ENCODE measurements at regions of chr6 and their contacts with region 1.

Region 1: GRCh38 chr6:142207265-142207877 is 60.3 kb downstream of the VTA1 start:
- DNase-seq: peak; percentile 33
- H3K4me3 Mint-ChIP-seq: no peak overlapping the region
- H3K27ac Mint-ChIP-seq: no peak overlapping the region
- H3K4me1 Mint-ChIP-seq: no peaks in the 10 kb centered on the region
- H3K27me3 Mint-ChIP-seq: no peaks in the 10 kb centered on the region

Region 2: GRCh38 chr6:141884850-141885249 is 322.5 kb before region 1 on chr6:
- CTCF ChIA-PET with region 1: no interaction called
- POLR2A ChIA-PET with region 1: no interaction called
- DNase-seq: no peak
- H3K4me3 Mint-ChIP-seq: no peak overlapping the region
- H3K27ac Mint-ChIP-seq: no peak overlapping the region
- H3K4me1 Mint-ChIP-seq: no peaks in the 10 kb centered on the region
- H3K27me3 Mint-ChIP-seq: no peaks in the 10 kb centered on the region

Region 3: GRCh38 chr6:142146828-142147662 is 60.3 kb before region 1 on chr6 and contains the starts of genes NMBR and VTA1:
- CTCF ChIA-PET with region 1: interaction called, 22 read pairs
- POLR2A ChIA-PET with region 1: interaction called, 7 read pairs
- DNase-seq: peak; percentile 97
- H3K4me3 Mint-ChIP-seq: peak within 1 kb of the TSS; percentile 94
- H3K27ac Mint-ChIP-seq: peak within 1 kb of the TSS; percentile 83
- H3K4me1 Mint-ChIP-seq: peaks cover 48% of the 10 kb centered on the region
- H3K27me3 Mint-ChIP-seq: no peaks in the 10 kb centered on the region
- total RNA-seq, gene NMBR: not detected
- total RNA-seq, gene VTA1: 37.0 to 37.6 TPM

Region 4: DNA sequence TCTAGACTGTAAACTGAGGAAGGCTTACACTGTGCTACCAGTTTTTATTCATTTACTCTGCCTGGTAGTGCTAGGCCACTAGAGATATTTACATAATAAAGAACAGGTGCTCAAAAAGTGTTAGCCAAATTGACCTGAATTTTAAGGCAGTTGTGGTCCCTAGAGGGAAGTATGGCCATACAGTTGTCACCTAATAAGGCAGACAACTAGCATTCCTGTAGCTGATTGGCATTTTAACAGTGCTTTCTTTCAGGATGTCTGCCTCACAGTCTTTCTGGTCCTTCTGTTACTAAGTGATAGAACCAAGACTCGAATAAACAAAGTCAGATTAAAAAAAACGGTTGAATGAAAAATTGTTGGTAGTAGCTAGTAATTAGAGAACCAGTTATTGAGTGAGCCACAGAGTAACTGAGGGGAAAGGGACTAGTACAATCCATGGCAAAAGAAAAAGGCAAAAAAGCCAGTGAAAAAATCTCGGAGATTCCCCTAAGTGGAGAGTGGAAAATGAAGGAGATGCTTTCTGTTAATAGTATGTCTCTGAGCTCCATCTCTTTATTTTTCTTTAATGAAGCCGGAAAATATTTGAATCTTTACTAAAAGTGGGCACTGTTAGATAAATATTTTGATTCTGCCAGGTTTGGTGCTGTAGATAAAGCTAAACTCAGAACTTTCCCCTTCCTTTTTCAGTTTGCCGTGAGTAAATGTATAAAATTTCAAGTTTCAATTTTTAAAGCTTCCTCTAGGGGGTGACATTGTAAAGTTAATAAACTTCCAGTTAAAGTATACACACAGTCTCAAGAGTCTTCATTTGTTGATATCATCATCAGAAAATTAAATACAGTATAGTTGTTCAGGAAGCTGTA is 51.2 kb before region 1 on chr6:
- CTCF ChIA-PET with region 1: interaction called, 32 read pairs
- POLR2A ChIA-PET with region 1: no interaction called
- DNase-seq: no peak
- H3K4me3 Mint-ChIP-seq: no peak overlapping the region
- H3K27ac Mint-ChIP-seq: no peak overlapping the region
- H3K4me1 Mint-ChIP-seq: peaks cover 13% of the 10 kb centered on the region
- H3K27me3 Mint-ChIP-seq: no peaks in the 10 kb centered on the region

Region 5: GRCh38 chr6:142189038-142189437 is 18.3 kb before region 1 on chr6:
- CTCF ChIA-PET with region 1: interaction called, 13 read pairs
- POLR2A ChIA-PET with region 1: no interaction called
- DNase-seq: no peak
- H3K4me3 Mint-ChIP-seq: no peak overlapping the region
- H3K27ac Mint-ChIP-seq: no peak overlapping the region
- H3K4me1 Mint-ChIP-seq: no peaks in the 10 kb centered on the region
- H3K27me3 Mint-ChIP-seq: no peaks in the 10 kb centered on the region

Region 6: DNA sequence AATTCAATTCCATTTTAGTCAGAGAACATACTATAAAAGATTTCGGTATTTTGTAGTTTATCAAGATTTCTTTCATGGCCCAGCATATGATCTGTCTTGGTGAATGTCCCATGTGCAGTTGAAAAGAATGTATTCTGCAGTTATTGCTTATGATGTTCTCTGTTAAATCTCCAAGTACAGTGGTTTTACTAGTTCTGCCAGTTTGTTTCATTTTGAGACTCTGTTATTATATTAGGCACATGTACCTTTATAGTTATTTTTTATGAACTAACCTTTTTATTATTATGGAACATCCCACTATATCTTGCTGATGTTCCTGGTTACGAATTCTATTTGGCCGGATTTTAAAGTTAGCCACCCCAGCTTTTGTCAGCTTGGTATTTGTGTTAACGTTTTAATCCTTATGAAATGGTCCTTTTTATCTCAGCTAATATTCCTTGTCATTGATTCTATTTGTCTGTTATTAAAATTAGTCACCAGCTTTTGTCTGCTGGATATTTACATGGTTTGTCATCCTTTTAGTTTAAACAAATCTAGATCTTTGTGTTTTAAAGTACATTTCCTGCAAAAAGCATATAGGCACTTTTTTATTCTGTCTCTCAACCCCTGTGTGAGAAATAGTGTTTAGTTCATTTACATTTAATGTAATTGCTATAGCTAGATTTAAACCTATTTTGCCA is 11.4 kb before region 1 on chr6:
- CTCF ChIA-PET with region 1: interaction called, 19 read pairs
- POLR2A ChIA-PET with region 1: no interaction called
- DNase-seq: no peak
- H3K4me3 Mint-ChIP-seq: no peak overlapping the region
- H3K27ac Mint-ChIP-seq: no peak overlapping the region
- H3K4me1 Mint-ChIP-seq: peaks cover 5% of the 10 kb centered on the region
- H3K27me3 Mint-ChIP-seq: no peaks in the 10 kb centered on the region

Region 7: DNA sequence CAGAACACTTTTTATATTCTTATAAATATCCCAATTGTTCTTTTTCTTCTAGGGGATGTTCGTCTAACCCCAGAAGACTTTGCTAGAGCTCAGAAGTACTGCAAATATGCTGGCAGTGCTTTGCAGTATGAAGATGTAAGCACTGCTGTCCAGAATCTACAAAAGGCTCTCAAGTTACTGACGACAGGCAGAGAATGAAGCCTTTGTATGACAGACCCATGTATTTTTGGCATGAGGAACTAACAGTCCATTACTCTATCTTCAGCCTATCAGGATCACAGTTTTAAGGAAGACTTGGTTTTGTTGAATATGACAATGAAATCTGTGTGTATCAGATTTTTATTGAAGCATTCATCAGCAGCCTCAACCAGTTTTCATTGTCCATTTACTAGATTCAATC is 11.1 kb after region 1 on chr6:
- CTCF ChIA-PET with region 1: interaction called, 13 read pairs
- POLR2A ChIA-PET with region 1: no interaction called
- DNase-seq: no peak
- H3K4me3 Mint-ChIP-seq: no peak overlapping the region
- H3K27ac Mint-ChIP-seq: no peak overlapping the region
- H3K4me1 Mint-ChIP-seq: no peaks in the 10 kb centered on the region
- H3K27me3 Mint-ChIP-seq: no peaks in the 10 kb centered on the region

Region 8: DNA sequence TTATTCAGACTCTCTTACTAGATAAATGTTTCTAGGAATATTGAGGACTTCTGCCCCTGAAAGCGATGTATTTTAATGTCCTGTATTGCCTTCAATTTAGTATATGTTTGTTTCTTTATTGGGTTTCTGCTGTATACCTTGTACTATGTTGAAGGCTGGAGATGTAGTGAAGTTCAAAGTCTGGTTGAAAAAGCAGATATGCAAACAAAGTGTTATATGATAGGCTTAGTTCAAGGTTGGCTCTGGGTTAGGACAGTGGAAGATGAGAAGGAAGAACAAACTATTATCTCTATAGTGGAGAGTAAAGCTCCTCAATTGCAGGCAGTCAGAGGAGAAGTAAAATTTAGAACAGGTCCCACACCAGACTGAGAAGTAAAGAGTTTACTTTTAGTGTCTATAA is 58.1 kb after region 1 on chr6:
- CTCF ChIA-PET with region 1: no interaction called
- POLR2A ChIA-PET with region 1: no interaction called
- DNase-seq: no peak
- H3K4me3 Mint-ChIP-seq: no peak overlapping the region
- H3K27ac Mint-ChIP-seq: no peak overlapping the region
- H3K4me1 Mint-ChIP-seq: no peaks in the 10 kb centered on the region
- H3K27me3 Mint-ChIP-seq: no peaks in the 10 kb centered on the region

Region 9: DNA sequence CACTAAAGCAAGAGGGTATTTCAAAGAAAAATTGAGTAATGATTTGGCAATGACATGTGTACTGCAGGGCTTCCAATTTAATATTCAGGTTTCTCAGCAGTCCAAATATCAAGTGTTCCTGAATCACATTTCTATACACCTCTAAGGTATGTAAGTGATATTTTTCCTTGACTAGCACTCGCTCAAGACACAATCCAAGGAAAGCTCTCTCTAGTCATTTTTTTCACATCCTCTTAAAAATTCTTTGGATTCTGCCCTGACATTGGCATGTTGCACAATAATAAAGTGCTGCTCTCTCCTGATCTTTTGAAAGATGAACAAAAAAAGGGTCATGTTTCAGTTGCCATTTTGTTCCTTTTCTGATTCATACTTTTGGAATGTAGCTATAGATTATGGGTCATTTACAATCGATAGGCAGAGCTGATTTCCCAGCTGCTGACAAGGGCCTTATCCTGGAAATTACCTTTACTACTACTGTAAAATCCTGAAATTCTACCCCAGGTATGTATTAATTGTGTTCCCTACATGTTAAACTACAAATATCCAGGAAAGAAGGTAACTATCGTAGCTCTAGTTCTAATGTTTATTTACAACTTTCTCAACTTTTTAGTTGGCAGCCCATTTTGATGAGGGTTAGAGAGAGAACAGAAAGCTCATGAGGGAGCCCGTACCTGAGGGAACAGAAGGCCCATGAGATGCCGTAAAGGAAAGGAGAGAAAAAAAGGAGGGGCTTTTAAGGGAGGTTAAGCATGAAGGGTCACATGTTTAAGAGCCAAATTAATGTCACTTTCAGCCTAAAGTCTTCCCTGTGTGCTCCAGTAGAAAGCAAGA is 72.2 kb after region 1 on chr6:
- CTCF ChIA-PET with region 1: no interaction called
- POLR2A ChIA-PET with region 1: no interaction called
- DNase-seq: no peak
- H3K4me3 Mint-ChIP-seq: no peak overlapping the region
- H3K27ac Mint-ChIP-seq: no peak overlapping the region
- H3K4me1 Mint-ChIP-seq: no peaks in the 10 kb centered on the region
- H3K27me3 Mint-ChIP-seq: peaks cover 2% of the 10 kb centered on the region

Measured in activated CD4-positive, alpha-beta memory T cell treated with anti-CD3 and anti-CD28 coated beads, Interleukin-2, amount 10 ng/mL, durations not matched to agents 7 days and 5 days (primary cell).